CD4-positive, alpha-beta T cell (primary cell): ENCODE measurements at regions of chr5 and their contacts with region 1.

Region 1: GRCh38 chr5:37015795-37016666 is 139.5 kb downstream of the NIPBL start:
- DNase-seq: no peak
- ATAC-seq: no peak
- H3K4me3 ChIP-seq: no peak overlapping the region
- H3K4me3 Mint-ChIP-seq: no peak overlapping the region
- H3K27ac ChIP-seq: no peak overlapping the region
- H3K27ac Mint-ChIP-seq: no peak overlapping the region
- H3K4me1 ChIP-seq: no peaks in the 10 kb centered on the region
- H3K4me1 Mint-ChIP-seq: no peaks in the 10 kb centered on the region
- H3K27me3 ChIP-seq: no peaks in the 10 kb centered on the region
- H3K27me3 Mint-ChIP-seq: no peaks in the 10 kb centered on the region
- CTCF ChIP-seq: no peak

Region 2: GRCh38 chr5:36998578-36998977 is 17.5 kb before region 1 on chr5:
- CTCF ChIA-PET with region 1: no interaction called
- POLR2A ChIA-PET with region 1: no interaction called
- intact Hi-C with region 1: no loop called
- DNase-seq: no peak
- ATAC-seq: no peak
- H3K4me3 ChIP-seq: no peak overlapping the region
- H3K4me3 Mint-ChIP-seq: no peak overlapping the region
- H3K27ac ChIP-seq: no peak overlapping the region
- H3K27ac Mint-ChIP-seq: peak overlapping the region; percentile 7
- H3K4me1 ChIP-seq: no peaks in the 10 kb centered on the region
- H3K4me1 Mint-ChIP-seq: peaks cover 7% of the 10 kb centered on the region
- H3K27me3 ChIP-seq: no peaks in the 10 kb centered on the region
- H3K27me3 Mint-ChIP-seq: no peaks in the 10 kb centered on the region
- CTCF ChIP-seq: no peak

Region 3: GRCh38 chr5:37055383-37055990 is 39.5 kb after region 1 on chr5:
- CTCF ChIA-PET with region 1: no interaction called
- POLR2A ChIA-PET with region 1: no interaction called
- intact Hi-C with region 1: loop called in 1 of 2 experiments (anchors 5 kb)
- DNase-seq: no peak
- ATAC-seq: no peak
- H3K4me3 ChIP-seq: no peak overlapping the region
- H3K4me3 Mint-ChIP-seq: no peak overlapping the region
- H3K27ac ChIP-seq: no peak overlapping the region
- H3K27ac Mint-ChIP-seq: peak overlapping the region; percentile 21
- H3K4me1 ChIP-seq: no peaks in the 10 kb centered on the region
- H3K4me1 Mint-ChIP-seq: no peaks in the 10 kb centered on the region
- H3K27me3 ChIP-seq: no peaks in the 10 kb centered on the region
- H3K27me3 Mint-ChIP-seq: no peaks in the 10 kb centered on the region
- CTCF ChIP-seq: no peak